ENCODE measurements at regions of chr21 and their contacts with region 1.

Region 1: DNA sequence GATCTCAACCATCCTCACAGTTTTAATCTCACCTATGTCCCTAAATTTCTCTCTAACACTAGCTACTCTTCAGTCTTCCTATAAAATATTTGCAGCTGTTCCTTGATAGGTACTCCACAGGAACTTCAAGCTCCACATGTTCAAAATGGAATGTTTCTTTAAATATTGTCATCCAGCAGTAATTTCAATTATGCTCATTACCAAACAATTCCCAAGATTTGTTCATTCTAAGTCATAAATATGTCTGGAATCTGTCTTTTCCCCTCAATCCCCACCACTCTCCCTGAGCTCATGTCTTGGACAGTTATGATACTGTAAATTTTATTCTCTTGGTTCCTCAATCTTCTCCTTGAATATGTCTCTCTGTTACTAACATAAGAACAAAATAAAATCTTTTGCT is 214.4 kb downstream of the NRIP1 start:
- DNase-seq: no peak
- ATAC-seq: no peak
- H3K4me3 ChIP-seq: no peak overlapping the region
- H3K27ac ChIP-seq: no peak overlapping the region
- H3K4me1 ChIP-seq: no peaks in the 10 kb centered on the region
- H3K27me3 ChIP-seq: no peaks in the 10 kb centered on the region
- CTCF ChIP-seq: no peak
- EP300 ChIP-seq: no peak
- POLR2A ChIP-seq: no peak
- RAD21 ChIP-seq: no peak

Region 2: GRCh38 chr21:14438211-14438610 is 412.2 kb before region 1 on chr21:
- CTCF ChIA-PET with region 1: no interaction called
- POLR2A ChIA-PET with region 1: no interaction called
- in situ Hi-C with region 1: no loop called
- intact Hi-C with region 1: loop called (anchors 10 kb)
- DNase-seq: no peak
- ATAC-seq: no peak
- H3K4me3 ChIP-seq: no peak overlapping the region
- H3K27ac ChIP-seq: no peak overlapping the region
- H3K4me1 ChIP-seq: no peaks in the 10 kb centered on the region
- H3K27me3 ChIP-seq: no peaks in the 10 kb centered on the region
- CTCF ChIP-seq: no peak
- EP300 ChIP-seq: no peak
- POLR2A ChIP-seq: no peak
- RAD21 ChIP-seq: no peak

Region 3: GRCh38 chr21:14864211-14865021 is 14.0 kb after region 1 on chr21:
- CTCF ChIA-PET with region 1: no interaction called
- POLR2A ChIA-PET with region 1: no interaction called
- in situ Hi-C with region 1: no loop called
- intact Hi-C with region 1: no loop called
- DNase-seq: peak; percentile 46 to 81 (median 57)
- ATAC-seq: peak; percentile 96
- H3K4me3 ChIP-seq: no peak overlapping the region
- H3K27ac ChIP-seq: no peak overlapping the region
- H3K4me1 ChIP-seq: peaks cover 0 to 16% of the 10 kb centered on the region in 2 experiments; a peak in 2 of 5 replicates
- H3K27me3 ChIP-seq: no peaks in the 10 kb centered on the region
- CTCF ChIP-seq: peak; percentile 73 to 82 (median 75)
- EP300 ChIP-seq: peak; percentile 4; the same call in 1 of the 2 replicates
- POLR2A ChIP-seq: no peak
- RAD21 ChIP-seq: peak; percentile 45 to 82